Left ventricle myocardium superior (tissue), 1 donor: ENCODE measurements at regions of chr11 and their contacts with region 1.

Region 1: DNA sequence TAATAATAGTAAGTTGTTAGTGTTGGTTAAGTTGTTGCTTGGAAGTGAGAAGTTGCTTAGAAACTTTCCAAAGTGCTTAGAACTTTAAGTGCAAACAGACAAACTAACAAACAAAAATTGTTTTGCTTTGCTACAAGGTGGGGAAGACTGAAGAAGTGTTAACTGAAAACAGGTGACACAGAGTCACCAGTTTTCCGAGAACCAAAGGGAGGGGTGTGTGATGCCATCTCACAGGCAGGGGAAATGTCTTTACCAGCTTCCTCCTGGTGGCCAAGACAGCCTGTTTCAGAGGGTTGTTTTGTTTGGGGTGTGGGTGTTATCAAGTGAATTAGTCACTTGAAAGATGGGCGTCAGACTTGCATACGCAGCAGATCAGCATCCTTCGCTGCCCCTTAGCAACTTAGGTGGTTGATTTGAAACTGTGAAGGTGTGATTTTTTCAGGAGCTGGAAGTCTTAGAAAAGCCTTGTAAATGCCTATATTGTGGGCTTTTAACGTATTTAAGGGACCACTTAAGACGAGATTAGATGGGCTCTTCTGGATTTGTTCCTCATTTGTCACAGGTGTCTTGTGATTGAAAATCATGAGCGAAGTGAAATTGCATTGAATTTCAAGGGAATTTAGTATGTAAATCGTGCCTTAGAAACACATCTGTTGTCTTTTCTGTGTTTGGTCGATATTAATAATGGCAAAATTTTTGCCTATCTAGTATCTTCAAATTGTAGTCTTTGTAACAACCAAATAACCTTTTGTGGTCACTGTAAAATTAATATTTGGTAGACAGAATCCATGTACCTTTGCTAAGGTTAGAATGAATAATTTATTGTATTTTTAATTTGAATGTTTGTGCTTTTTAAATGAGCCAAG is 2.7 kb downstream of the NEAT1 start:
- DNase-seq: no peak
- ATAC-seq: no peak

Region 2: DNA sequence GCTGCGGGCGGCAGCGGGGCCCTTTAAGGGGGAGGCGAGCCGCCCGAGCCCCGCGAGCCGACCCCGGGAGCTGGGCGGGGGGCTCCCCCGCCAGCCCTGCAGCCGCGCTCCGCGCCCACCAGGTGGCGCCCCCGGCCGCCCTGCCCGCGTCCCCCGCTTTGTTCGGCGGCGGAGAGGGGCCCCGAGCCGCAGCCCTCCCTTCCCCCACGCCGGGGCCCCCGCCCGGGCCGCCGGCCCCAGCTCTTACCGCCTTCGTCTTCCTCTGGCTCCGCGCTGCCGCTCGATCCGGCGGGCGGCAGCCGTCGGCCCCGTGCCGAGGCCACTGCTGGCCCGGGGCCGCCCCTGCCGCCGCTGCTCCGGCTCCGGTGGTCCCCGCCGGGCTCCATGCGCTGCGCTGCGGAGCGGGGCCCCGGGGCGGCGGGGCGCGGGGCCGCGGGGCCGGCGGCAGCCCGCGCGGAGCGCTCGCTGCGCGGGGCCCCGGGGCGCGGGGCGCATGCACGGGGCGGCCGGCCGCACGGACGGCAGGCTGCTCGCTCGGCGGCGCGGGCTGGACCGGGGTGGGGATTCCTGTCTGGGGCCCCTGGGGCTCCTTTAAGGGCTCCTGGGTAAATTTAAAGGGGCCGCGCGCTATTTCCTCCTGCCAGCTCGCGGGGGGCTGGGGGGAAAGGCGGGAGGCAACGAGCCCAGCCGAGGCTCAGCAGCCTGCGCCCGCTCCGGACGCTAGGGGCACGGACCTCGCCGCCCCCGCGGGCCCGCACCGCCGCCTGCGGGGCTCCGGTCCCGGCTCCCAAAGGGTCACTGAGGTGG is 1656.9 kb before region 1 on chr11 and contains the start of gene ZFTA:
- intact Hi-C with region 1: no loop called
- DNase-seq: peak; percentile 84
- ATAC-seq: peak; percentile 42
- total RNA-seq, gene ZFTA: 16.4 TPM

Region 3: GRCh38 chr11:65334696-65335295 is 90.5 kb before region 1 on chr11:
- intact Hi-C with region 1: no loop called
- DNase-seq: no peak
- ATAC-seq: no peak

Region 4: DNA sequence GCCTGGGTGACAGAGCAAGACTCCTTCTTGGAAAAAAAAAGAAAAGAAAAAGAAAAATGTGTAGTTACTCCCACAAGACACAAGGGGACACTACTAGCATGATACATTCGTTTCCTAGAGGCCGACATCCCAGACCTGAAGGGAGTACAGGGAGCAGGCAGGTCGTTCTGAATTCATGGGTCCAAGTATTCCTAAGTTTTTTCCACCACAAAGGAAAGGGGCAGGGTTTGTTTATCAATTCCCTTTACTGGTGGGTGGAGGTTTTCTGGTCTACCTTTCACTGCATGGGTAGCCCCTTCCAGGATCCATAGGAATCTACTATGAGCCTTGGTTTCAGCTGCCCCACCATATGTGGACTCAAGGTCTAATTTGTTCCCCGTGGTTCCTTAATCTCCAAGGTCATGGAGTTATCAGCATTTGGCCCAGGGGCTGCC is 59.0 kb before region 1 on chr11:
- intact Hi-C with region 1: no loop called
- DNase-seq: no peak
- ATAC-seq: peak; percentile 69

Region 5: DNA sequence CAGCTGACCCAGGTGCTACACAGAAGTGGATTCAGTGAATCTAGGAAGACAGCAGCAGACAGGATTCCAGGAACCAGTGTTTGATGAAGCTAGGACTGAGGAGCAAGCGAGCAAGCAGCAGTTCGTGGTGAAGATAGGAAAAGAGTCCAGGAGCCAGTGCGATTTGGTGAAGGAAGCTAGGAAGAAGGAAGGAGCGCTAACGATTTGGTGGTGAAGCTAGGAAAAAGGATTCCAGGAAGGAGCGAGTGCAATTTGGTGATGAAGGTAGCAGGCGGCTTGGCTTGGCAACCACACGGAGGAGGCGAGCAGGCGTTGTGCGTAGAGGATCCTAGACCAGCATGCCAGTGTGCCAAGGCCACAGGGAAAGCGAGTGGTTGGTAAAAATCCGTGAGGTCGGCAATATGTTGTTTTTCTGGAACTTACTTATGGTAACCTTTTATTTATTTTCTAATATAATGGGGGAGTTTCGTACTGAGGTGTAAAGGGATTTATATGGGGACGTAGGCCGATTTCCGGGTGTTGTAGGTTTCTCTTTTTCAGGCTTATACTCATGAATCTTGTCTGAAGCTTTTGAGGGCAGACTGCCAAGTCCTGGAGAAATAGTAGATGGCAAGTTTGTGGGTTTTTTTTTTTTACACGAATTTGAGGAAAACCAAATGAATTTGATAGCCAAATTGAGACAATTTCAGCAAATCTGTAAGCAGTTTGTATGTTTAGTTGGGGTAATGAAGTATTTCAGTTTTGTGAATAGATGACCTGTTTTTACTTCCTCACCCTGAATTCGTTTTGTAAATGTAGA is 75.2 kb after region 1 on chr11:
- intact Hi-C with region 1: loop called (anchors 5 kb)
- DNase-seq: peak; percentile 48
- ATAC-seq: no peak

Region 6: DNA sequence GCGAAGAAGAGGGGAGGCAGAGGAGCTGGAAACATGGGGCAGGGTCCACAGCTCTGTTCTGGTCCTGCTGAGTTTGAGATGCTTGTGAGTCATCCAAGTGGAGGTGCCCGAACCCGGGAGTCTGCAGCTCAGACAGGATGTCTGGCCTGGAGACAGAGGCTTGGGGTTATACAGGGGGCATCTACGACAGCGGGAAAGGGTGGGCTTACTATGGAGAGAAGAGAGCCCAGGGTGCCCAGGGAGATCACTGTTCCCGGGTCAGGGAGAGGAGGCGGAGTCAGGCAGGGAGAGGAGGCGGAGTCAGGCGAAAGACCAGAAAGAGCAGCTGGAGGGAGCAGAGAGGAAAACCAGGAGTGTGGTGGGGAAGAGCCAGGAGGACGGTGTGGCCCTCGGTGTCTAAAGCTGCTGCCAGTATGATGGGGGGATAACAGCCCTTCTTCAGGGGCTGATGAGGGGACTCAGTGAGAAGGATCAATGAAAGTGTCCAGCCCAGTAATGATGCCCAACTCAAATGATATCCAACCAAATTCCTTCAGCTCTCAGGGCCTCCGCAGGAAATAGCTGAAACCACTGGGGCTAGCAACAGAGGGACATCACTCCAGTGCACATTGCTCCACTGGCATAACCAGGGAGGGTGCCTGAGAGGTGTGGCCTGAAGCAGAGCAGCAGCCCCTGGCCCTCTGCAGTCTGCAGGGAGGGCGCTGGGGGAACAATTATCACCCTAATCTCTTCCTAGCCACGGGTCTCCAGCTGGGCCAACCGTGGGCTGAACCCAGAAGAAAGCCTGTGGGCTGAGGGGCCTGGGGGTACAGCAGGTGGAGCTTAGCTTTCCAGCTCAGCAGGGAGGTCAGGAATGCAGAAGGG is 135.4 kb after region 1 on chr11:
- intact Hi-C with region 1: no loop called
- DNase-seq: peak; percentile 75
- ATAC-seq: peak; percentile 5